Dorsolateral prefrontal cortex (tissue), 120 donors: ENCODE measurements at regions of chr4 and their contacts with region 1.

Region 1: DNA sequence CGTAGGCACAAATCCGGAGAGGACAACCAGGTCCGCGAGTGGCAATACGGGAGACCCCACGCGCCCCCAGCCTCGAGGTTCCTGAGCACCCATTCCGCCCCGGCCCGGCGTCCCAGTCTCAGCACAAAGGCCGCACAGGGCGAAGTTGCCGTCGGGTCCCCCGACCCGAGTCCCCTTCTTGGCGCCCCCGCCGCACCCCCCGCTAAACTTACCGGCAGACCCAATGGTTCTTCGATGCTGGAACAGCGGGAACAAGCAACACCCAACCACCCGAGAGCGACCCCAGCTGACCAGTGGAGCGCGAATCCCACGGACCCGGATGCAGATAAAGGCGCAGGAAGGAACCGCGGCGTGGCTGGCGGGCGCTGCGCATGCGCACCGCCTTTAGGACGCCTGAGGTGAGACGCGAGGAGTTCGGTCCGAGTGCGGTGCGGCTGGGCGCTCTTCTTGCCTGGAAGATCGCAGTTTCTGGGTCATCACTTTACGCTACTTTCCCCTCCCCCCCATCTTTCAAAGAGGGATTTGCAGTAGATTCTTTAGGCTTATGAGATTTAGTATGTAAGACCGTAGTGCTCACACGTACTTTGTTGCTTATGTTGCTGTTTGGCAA is at the start of gene GNPDA2:
- DNase-seq: peak; percentile 81 to 92 (median 88)
- H3K4me3 ChIP-seq: peak within 1 kb of the TSS; percentile 63 to 97 (median 82)
- H3K27ac ChIP-seq: peak within 1 kb of the TSS in 55 of 59 donors; percentile 14 to 93 (median 80)
- H3K27me3 ChIP-seq: peaks cover 0 to 3% (median 0%) of the 10 kb centered on the region in 45 donors
- CTCF ChIP-seq: peak in 51 of 56 donors; percentile 15 to 68 (median 40)
- total RNA-seq, gene GNPDA2: 15.1 to 34.0 (median 26.3) TPM

Region 2: GRCh38 chr4:44651425-44651824 is 74.9 kb before region 1 on chr4 and contains the start of gene YIPF7:
- intact Hi-C with region 1: no loop called
- DNase-seq: no peak
- H3K4me3 ChIP-seq: no peak within 1 kb of the TSS
- H3K27ac ChIP-seq: peak within 1 kb of the TSS in 14 of 59 donors; percentile 6 to 75 (median 28)
- H3K27me3 ChIP-seq: no peaks in the 10 kb centered on the region
- CTCF ChIP-seq: no peak
- total RNA-seq, gene YIPF7: 0.62 to 6.0 (median 2.7) TPM in 118 of 120 experiments, not detected in the others

Region 3: GRCh38 chr4:44678094-44679041 is 48.0 kb before region 1 on chr4 and contains the start of gene GUF1:
- intact Hi-C with region 1: loop called (anchors 2 to 5 kb)
- DNase-seq: peak; percentile 78 to 93 (median 90)
- H3K4me3 ChIP-seq: peak within 1 kb of the TSS; percentile 68 to 97 (median 86)
- H3K27ac ChIP-seq: peak within 1 kb of the TSS; percentile 39 to 97 (median 89)
- H3K27me3 ChIP-seq: no peaks in the 10 kb centered on the region
- CTCF ChIP-seq: peak in 20 of 56 donors; percentile 4 to 53 (median 20)
- total RNA-seq, gene GUF1: 14.8 to 35.0 (median 27.3) TPM